ENCODE measurements at regions of chr9 and their contacts with region 1.

Region 1: GRCh38 chr9:3732077-3733038 is 206.6 kb upstream of the RFX3 start:
- DNase-seq: peak; percentile 42
- H3K4me3 Mint-ChIP-seq: peak overlapping the region; percentile 20
- H3K27ac Mint-ChIP-seq: peak overlapping the region; percentile 49
- H3K4me1 Mint-ChIP-seq: peaks cover 51% of the 10 kb centered on the region
- H3K27me3 Mint-ChIP-seq: no peaks in the 10 kb centered on the region

Region 2: DNA sequence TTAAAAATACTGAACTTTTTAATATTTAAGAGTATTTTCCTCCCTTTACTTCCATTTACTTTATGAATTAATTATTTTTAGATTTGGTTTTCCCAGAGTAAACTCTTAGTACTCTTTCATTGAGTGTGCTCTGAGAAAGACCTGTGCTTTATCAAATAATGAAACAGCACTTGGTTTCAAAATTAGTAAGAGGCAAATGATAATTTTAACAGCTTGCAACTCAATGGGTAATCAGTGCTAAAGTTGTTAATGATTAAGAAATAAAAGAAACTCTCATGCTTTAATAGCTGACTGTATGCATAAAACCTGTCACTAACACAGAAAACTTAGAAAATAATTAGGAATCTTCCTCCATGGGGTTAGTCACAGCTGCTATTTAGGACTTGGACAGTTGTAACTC is 451.0 kb before region 1 on chr9:
- intact Hi-C with region 1: no loop called
- DNase-seq: no peak
- H3K4me3 Mint-ChIP-seq: no peak overlapping the region
- H3K27ac Mint-ChIP-seq: no peak overlapping the region
- H3K4me1 Mint-ChIP-seq: peaks cover 7% of the 10 kb centered on the region
- H3K27me3 Mint-ChIP-seq: no peaks in the 10 kb centered on the region

Region 3: GRCh38 chr9:3467593-3468219 is 264.7 kb before region 1 on chr9:
- intact Hi-C with region 1: loop called (anchors 2 kb)
- DNase-seq: peak; percentile 41
- H3K4me3 Mint-ChIP-seq: no peak overlapping the region
- H3K27ac Mint-ChIP-seq: no peak overlapping the region
- H3K4me1 Mint-ChIP-seq: peaks cover 7% of the 10 kb centered on the region
- H3K27me3 Mint-ChIP-seq: no peaks in the 10 kb centered on the region

Region 4: GRCh38 chr9:3758816-3759576 is 26.6 kb after region 1 on chr9:
- intact Hi-C with region 1: loop called (anchors 2 kb)
- DNase-seq: peak; percentile 10
- H3K4me3 Mint-ChIP-seq: no peak overlapping the region
- H3K27ac Mint-ChIP-seq: no peak overlapping the region
- H3K4me1 Mint-ChIP-seq: peaks cover 26% of the 10 kb centered on the region
- H3K27me3 Mint-ChIP-seq: no peaks in the 10 kb centered on the region

Region 5: GRCh38 chr9:3906432-3907213 is 174.3 kb after region 1 on chr9:
- intact Hi-C with region 1: loop called (anchors 1 kb)
- DNase-seq: no peak
- H3K4me3 Mint-ChIP-seq: no peak overlapping the region
- H3K27ac Mint-ChIP-seq: no peak overlapping the region
- H3K4me1 Mint-ChIP-seq: peaks cover 71% of the 10 kb centered on the region
- H3K27me3 Mint-ChIP-seq: no peaks in the 10 kb centered on the region

Region 6: DNA sequence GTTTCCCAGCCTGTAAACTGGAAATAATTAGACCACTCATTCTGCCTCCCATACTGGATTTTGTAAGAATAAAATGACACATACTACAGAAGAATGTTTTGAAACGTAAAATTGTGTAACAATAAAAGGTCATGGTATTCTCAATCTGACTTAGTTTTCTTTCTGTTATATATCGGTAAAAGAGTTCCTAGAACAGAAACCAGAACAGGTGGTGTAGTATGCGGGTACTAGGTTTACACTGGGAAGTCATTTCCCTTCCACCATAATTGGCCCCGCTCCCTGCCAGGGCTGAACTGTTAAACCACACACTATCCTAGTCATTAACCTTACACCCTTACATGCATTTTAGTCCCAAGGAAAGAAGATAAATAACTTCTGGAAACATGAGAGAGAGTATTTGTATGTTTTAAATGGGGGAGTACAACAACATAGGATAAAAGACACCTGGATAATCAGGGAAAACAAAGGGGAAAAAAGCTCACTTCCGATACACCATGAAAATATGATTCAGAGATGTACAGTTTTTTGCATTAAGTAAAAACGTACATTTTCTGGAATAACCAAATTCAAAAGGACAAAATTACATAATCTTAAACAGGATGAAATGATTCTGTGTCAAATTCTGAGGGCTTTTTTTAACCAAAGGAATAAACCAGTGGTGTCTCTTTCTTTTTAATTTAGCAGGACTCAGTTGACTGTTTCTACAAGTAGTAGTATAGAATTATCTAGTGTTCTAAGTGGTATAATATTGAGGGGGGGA is 367.8 kb after region 1 on chr9:
- intact Hi-C with region 1: loop called (anchors 5 kb)
- DNase-seq: no peak
- H3K4me3 Mint-ChIP-seq: no peak overlapping the region
- H3K27ac Mint-ChIP-seq: peak overlapping the region; percentile 26
- H3K4me1 Mint-ChIP-seq: peaks cover 27% of the 10 kb centered on the region
- H3K27me3 Mint-ChIP-seq: no peaks in the 10 kb centered on the region

Region 7: DNA sequence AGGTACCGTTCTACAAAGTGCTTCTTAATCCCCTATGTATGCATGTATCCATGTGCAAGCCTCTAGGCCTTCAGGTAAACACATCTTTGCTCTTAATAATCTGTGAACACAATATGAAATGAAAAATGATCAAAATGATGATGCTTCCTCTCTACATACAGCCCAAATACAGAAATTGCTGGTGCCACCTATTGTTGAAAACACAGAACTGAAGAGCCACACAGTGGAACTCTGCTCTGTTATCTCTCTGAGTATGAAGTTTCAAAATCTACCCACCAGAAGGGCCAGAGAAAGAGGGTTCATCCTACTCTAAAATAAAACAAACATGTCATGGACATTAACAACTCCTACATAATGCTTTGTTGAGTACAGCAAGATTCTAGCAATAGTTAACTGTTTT is 496.2 kb after region 1 on chr9:
- intact Hi-C with region 1: loop called (anchors 1 kb)
- DNase-seq: no peak
- H3K4me3 Mint-ChIP-seq: no peak overlapping the region
- H3K27ac Mint-ChIP-seq: no peak overlapping the region
- H3K4me1 Mint-ChIP-seq: peaks cover 19% of the 10 kb centered on the region
- H3K27me3 Mint-ChIP-seq: no peaks in the 10 kb centered on the region

Region 8: DNA sequence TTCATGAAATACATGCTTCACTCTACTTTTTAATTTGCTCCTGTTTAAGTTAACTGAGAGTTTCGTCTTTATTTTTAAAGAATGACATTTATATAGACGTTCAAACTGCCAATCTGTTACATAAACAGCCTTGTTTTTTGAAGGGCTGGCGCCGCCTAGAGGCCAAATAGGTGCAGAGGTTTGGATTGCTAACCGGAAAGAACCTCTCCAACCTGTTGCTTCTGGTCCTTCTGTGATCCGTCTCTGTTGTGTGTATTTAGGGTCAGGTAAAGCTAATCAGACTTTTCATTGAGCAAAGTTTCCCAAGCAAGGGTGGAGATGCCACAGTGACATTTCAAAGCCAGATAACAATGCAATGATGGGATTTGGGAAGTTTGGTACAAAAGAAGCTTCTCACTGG is 607.0 kb after region 1 on chr9:
- intact Hi-C with region 1: loop called (anchors 1 kb)
- DNase-seq: peak; percentile 69
- H3K4me3 Mint-ChIP-seq: peak overlapping the region; percentile 27
- H3K27ac Mint-ChIP-seq: peak overlapping the region; percentile 51
- H3K4me1 Mint-ChIP-seq: peaks cover 10% of the 10 kb centered on the region
- H3K27me3 Mint-ChIP-seq: peaks cover 2% of the 10 kb centered on the region